Prostate gland (tissue), 2 donors: ENCODE measurements at regions of chrX and their contacts with region 1.

Region 1: GRCh38 chrX:139559383-139560042 is 29.0 kb downstream of the F9 start:
- DNase-seq: peak; percentile 46
- H3K4me3 ChIP-seq: no peak overlapping the region
- H3K27ac ChIP-seq: no peak overlapping the region
- H3K4me1 ChIP-seq: no peaks in the 10 kb centered on the region
- H3K27me3 ChIP-seq: no peaks in the 10 kb centered on the region
- CTCF ChIP-seq: peak in 3 of 4 experiments; percentile 37 to 58 (median 51)
- POLR2A ChIP-seq: no peak

Region 2: DNA sequence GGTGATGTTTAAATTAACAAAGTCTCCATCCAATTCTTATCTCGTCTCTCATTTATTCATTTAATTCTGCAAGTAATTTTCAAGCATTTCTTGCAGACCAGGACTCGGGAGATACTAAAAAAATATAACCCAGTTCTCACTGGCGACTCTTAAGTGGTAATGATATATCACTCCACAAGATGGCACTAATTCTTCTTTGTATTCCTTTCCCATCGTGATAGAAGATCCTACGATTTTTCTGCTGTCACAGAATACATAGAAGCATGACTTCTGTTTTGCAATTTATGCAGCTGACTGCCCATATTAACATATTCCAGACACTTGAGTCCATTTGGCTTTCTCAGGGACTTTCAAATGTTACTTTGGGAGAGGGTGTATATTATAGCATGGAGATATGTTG is 784.0 kb before region 1 on chrX:
- intact Hi-C with region 1: loop called (anchors 10 kb)
- DNase-seq: no peak
- H3K4me3 ChIP-seq: no peak overlapping the region
- H3K27ac ChIP-seq: no peak overlapping the region
- H3K4me1 ChIP-seq: no peaks in the 10 kb centered on the region
- H3K27me3 ChIP-seq: no peaks in the 10 kb centered on the region
- CTCF ChIP-seq: peak in 3 of 4 experiments; percentile 17 to 51 (median 34)
- POLR2A ChIP-seq: no peak